GM18951 (cell line): ENCODE measurements at regions of chr20 and their contacts with region 1.

Region 1: GRCh38 chr20:17898548-17898994 is 70.0 kb downstream of the SNX5 start:
- POLR2A ChIP-seq: no peak

Region 2: DNA sequence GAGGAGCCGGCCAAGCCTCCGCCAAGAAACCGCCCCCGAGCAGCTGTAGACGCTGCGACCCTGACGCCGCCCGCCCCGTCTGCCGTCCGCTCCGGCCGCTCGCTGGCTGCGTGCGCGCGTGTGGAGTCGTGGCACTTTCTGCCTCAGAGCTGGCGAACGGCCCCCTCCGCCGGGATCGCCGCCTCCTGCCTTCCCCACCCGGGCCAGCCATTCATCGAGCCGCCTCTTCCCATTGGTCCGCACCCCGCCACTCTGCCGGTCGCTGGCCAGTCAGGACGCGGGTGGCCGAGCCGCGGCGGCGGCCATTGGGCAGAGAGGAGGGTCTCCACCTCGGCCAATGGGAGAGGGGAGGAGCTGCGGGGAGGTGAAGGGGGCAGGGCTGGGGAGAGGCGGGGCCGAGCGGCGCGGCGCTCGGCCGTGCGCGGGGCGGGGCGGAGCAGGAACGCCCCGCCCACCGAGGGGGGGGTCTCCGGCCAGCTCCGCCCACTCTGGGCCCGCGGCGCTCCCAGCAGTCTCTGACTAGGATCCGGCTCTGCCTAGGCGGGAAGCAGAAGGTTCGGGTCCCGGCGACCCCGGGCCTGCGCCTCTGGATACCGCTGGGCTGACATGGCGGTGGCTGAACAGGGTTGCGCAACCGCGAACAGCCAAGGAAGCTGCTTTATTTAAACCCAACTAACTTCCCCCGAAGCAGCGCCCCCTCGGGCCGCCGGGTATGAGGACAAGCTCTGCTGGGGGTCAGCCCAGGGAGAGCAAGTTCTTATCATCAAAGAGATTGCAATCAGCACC is 216.3 kb before region 1 on chr20 and contains the start of gene RRBP1:
- in situ Hi-C with region 1: loop called (anchors 25 kb)
- POLR2A ChIP-seq: peak; percentile 87

Region 3: DNA sequence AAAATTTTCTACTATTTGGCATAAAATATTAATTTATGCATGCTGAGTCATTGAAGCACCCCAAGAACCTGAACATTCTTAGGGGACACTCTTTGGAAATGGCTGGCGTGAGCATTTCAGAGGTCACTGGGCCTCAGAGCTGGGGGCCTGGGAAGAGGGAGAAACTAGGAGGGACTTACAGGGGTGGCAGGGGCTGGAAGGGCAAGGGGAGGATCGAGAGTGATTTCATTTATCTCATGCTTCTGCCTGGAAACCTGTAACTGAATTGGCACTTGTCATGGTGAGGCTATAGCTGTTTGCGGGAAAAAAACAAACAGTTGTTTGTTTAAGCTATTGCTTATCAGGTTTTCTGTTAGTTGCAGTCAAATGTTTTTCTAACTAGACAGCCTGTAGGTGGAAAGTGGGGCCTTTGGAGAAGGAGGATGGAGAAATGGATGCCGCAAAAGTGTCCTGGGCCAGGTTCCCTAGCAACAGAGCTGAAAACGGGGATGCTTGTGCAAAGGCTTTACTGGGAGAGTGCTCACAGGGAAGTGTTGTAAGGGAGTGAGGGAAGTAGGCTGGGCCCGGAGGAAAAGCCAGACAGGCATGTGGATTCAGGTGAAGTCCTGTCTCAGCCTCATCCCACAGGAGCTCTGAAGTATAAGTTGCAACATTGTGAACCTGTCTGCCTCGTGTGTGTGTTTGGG is 202.7 kb after region 1 on chr20:
- in situ Hi-C with region 1: no loop called
- POLR2A ChIP-seq: no peak